Activated T-helper 2 cell treated with anti-CD3 and anti-CD28 coated beads, Interferon-gamma antibody, Interleukin-2, Interleukin-4, amounts not matched to agents 10 μg/mL and 5 μg/mL and 100 μg/mL, durations not matched to agents 14 hours and 24 hours and 36 hours (primary cell): ENCODE measurements at regions of chr9 and their contacts with region 1.

Region 1: DNA sequence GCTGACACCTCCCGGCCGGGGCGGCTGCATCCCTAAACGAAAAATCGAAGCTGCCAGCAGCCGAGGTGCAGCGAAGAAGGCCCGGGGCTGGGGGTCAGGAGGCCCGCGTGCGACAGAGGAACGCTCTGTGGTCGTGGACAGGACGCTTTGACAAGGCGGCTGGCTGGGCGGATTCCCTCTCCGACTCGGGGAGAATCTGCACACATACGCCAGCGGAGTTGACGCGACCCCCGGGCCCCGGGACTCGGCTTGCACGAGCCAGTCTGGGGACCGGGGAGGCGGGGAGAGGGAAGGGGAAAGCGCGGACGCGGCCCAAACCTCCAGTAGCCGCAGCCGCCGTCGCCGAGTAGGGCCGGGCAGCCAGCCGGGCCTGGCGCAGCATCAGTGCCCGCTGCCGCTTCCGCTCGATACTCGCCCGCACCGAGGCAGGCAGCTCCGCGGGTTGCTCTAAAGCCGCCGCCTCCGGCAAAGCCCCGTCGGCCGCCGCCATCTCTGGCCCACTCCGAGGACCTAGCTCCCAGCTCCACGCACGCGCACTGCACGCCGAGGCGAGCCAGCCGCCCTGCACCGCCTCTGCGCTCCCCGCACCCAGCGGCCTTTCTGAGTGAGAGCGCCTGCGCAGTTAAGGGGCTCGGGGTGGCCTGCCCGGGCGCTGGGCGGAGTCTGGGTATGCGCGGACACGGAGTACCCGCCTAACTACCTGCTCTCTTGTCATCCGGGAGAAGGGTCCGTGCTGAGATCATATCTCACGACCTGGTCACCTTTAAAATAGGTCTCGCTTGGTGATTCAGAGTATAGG is at the start of gene XPA:
- DNase-seq: peak; percentile 97
- H3K4me3 Mint-ChIP-seq: peak within 1 kb of the TSS; percentile 90
- H3K27ac Mint-ChIP-seq: peak within 1 kb of the TSS; percentile 83
- H3K4me1 Mint-ChIP-seq: peaks cover 44% of the 10 kb centered on the region
- H3K27me3 Mint-ChIP-seq: peaks cover 2% of the 10 kb centered on the region
- total RNA-seq, gene XPA: 10.3 and 14.6 TPM in 2 replicates

Region 2: DNA sequence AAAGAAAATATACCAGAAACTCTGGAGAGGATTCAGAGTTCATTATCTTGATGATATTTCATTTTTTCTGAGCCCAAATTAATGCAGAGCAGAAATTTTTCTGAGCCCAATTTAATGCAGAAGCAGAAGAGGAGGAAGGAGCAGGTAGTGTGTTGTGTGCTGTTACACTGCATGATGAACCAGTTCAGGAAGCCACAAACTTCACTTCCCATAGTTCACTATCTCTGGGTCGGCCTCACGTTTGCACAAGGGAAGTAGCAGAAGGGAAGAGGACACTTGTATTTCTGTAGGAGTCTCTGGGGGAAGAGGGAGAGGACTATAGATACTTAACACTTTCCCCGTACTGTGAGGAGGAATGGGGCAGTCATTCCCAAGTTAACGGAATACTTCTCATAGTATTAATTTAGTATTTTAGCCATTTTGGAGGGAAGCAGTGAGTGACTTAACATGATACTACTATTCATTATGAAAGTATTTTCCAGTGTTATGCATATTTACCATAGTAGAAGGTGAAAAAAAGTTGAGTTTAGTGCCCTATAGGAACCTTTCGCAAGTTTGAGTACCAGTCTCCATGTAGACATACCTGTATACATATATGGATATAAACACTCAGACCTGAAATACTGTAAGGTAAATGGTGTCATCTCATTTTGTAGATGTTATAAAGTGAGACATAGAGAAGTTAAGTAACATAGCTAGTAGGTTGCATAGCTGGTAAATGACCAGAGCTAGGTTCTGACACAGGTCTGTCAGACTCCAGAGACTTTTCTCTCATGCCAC is 29.9 kb before region 1 on chr9:
- intact Hi-C with region 1: no loop called
- DNase-seq: no peak
- H3K4me3 Mint-ChIP-seq: no peak overlapping the region
- H3K27ac Mint-ChIP-seq: peak overlapping the region; percentile 54
- H3K4me1 Mint-ChIP-seq: peaks cover 34% of the 10 kb centered on the region
- H3K27me3 Mint-ChIP-seq: no peaks in the 10 kb centered on the region

Region 3: GRCh38 chr9:97900738-97901565 is 203.9 kb after region 1 on chr9:
- intact Hi-C with region 1: loop called (anchors 5 kb)
- DNase-seq: no peak
- H3K4me3 Mint-ChIP-seq: no peak overlapping the region
- H3K27ac Mint-ChIP-seq: no peak overlapping the region
- H3K4me1 Mint-ChIP-seq: peaks cover 35% of the 10 kb centered on the region
- H3K27me3 Mint-ChIP-seq: no peaks in the 10 kb centered on the region